Mucosa of descending colon (tissue), 3 donors: ENCODE measurements at regions of chr16 and their contacts with region 1.

Region 1: GRCh38 chr16:20849587-20850390 is 43.5 kb downstream of the REXO5 start:
- DNase-seq: peak in 2 of 3 donors; percentile 76 to 87
- ATAC-seq: peak; percentile 82
- H3K4me3 ChIP-seq: no peak overlapping the region
- H3K4me1 ChIP-seq: peaks cover 4% of the 10 kb centered on the region
- CTCF ChIP-seq: peak; percentile 95

Region 2: DNA sequence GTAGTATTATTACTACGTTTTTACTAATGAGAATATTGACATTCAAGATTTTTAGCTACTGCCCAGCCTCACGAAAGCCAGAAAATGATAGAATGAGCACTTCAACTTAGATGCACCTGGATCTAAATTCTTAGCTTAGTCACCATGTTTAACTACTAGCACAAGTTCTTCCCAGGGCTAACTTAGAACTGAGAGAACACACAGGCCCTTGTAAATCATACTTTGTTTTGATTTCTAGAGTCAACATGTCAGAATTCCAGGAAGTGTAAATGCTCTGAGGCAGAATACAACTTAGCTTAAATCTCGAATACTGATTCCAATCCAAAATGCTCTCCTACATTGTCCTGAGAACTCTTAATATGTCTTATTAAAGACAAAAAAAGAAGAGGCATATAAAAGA is 145.5 kb before region 1 on chr16:
- intact Hi-C with region 1: no loop called
- DNase-seq: no peak
- ATAC-seq: peak; percentile 80
- H3K4me3 ChIP-seq: no peak overlapping the region
- H3K4me1 ChIP-seq: no peaks in the 10 kb centered on the region
- CTCF ChIP-seq: no peak

Region 3: GRCh38 chr16:21083729-21084268 is 234.0 kb after region 1 on chr16:
- intact Hi-C with region 1: loop called (anchors 1 to 5 kb)
- DNase-seq: peak in 2 of 3 donors; percentile 71 to 85
- ATAC-seq: peak; percentile 91
- H3K4me3 ChIP-seq: no peak overlapping the region
- H3K4me1 ChIP-seq: no peaks in the 10 kb centered on the region
- CTCF ChIP-seq: peak; percentile 39

Region 4: GRCh38 chr16:21088646-21089538 is 239.1 kb after region 1 on chr16:
- intact Hi-C with region 1: loop called in 1 of 2 experiments (anchors 5 kb)
- DNase-seq: no peak
- ATAC-seq: no peak
- H3K4me3 ChIP-seq: no peak overlapping the region
- H3K4me1 ChIP-seq: no peaks in the 10 kb centered on the region
- CTCF ChIP-seq: no peak